Left cardiac atrium (tissue), 4 donors: ENCODE measurements at regions of chr19 and their contacts with region 1.

Region 1: DNA sequence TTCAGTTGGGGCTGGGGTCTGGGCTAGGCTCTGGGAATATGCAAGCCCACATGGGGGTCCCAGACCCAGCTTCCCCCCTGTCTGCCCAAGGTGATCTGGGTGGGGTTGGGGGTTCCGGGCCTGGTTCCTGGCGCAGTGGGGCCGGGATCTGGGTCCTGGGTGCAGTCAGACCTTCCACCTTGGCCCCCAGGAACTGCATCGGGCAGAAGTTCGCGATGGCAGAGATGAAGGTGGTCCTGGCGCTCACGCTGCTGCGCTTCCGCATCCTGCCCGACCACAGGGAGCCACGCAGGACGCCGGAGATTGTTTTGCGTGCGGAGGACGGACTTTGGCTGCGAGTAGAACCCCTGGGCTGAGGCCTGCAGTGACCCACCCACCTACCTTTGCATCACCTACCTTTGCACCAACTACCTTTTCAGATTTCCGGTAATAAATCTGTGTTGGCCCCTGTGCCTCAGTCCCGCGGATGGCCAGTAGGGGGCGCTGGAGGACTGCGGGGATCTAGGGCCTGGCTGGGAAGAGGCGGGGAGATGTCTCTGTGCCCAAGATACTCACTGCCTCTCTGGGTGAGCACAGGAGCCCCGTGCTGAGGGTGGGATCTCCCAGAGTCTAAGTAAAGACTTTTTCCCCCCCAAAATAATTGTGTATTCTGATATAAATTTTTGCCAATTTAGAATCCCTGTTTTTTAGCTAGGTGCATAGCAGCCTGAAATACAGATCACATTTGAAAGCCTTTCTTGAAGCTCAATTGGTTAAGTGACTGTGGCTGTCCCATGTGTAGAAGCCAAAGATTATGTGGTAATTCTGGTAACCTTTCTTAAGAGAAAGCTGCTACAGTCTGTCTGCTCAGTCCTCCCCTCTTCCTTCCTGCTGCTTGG is 11.5 kb upstream of the CYP4F3 start:
- DNase-seq: peak; percentile 82
- ATAC-seq: peak; percentile 90 to 91

Region 2: GRCh38 chr19:15672580-15673175 is 43.4 kb after region 1 on chr19 and contains the start of gene CYP4F12:
- intact Hi-C with region 1: no loop called
- DNase-seq: peak; percentile 89
- ATAC-seq: peak; percentile 98
- total RNA-seq, gene CYP4F12: 2.2 to 5.7 TPM

Region 3: GRCh38 chr19:15810335-15810734 is 181.1 kb after region 1 on chr19:
- intact Hi-C with region 1: loop called (anchors 5 to 10 kb)
- DNase-seq: no peak
- ATAC-seq: no peak

Region 4: GRCh38 chr19:15869109-15869555 is 239.9 kb after region 1 on chr19:
- intact Hi-C with region 1: loop called in 1 of 2 experiments (anchors 2 kb)
- DNase-seq: no peak
- ATAC-seq: peak; percentile 59 to 75